ENCODE measurements at regions of chr2 and their contacts with region 1.

Region 1: DNA sequence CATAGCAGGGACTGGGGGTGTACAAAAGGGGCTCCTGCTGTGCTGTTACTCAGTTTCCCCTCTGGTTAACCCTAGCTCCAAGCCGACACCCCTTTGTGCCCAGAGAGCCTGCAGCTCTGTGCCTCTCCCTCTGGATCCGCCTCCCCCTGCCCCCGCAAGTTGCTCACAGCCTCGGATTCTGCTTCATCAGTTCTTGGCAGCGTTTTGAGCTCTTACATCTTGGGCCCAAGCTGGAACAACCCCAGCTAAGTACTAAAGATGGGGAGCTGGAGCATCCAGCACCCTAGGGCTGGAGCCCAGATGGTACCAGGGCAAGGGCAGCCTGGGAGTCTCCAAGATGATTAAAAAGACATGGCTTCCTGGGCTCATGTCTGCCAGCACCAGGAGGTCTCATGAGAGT is 40.7 kb downstream of the POMC start:
- DNase-seq: no peak

Region 2: GRCh38 chr2:24586955-24587354 is 540.7 kb before region 1 on chr2:
- in situ Hi-C with region 1: no loop called
- DNase-seq: no peak

Region 3: DNA sequence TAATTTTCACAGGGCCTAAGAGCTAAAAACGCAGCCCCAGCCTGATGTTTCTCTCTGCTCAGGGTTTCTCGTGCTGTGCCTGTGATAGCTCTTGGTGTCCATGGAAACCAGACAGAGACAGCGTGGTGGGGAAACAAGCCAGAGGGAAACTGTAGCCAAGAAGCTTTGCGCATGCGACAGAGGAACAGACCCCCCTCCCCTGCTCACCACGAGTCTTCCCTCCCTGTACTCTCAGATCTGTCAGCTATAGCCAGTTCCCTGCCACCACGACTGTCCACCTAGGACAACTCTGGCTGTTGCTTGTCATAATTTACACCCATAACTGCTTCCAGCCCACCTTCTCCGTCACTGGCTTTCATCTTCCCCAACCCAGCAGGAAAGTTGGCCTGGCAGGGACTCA is 142.7 kb before region 1 on chr2:
- in situ Hi-C with region 1: loop called (anchors 10 kb)
- DNase-seq: peak; percentile 50

Measured in KBM-7 (cell line).